Right ventricle myocardium inferior (tissue), 1 donor: ENCODE measurements at regions of chr3 and their contacts with region 1.

Region 1: GRCh38 chr3:51799879-51800749 is 21.1 kb upstream of the IQCF6 start:
- DNase-seq: no peak
- ATAC-seq: no peak

Region 2: GRCh38 chr3:51718547-51719409 is 81.3 kb before region 1 on chr3:
- intact Hi-C with region 1: loop called (anchors 5 kb)
- DNase-seq: peak; percentile 78
- ATAC-seq: peak; percentile 62